Panc1 (cell line): ENCODE measurements at regions of chr10 and their contacts with region 1.

Region 1: DNA sequence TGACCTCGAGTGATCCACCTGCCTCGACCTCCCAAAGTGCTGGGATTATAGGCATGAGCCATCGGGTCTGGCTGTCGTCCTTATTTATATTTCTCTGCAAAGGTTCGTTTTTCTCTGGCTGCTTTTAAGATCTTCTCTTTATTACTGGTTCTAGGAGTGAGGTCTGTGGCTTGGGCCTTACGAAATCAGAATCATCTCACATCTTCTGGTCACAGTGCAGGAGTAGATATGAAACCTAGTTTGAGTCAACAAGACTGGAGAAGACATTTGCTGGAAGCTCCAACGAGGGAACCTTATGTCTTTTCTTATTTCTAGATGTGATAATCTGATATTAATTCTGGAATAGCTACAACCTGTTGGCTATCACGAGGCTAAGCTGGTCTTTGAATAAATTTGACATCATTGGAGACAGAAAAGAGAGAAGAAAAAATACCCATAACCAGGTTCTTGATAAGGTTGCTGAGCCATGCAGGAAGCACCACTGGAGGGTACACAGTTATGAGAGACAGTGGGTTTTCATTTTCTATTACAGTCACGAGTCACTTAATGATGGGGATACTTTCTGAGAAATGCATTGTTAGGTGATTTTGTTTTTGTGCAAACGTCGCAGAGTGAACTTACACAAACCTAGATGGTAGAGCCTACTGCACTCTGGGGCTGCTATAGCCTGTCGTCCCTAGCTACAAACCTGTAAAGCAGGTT is 25.6 kb upstream of the IL15RA start:
- DNase-seq: no peak
- ATAC-seq: no peak
- H3K4me3 ChIP-seq: no peak overlapping the region
- H3K27ac ChIP-seq: no peak overlapping the region
- H3K4me1 ChIP-seq: no peaks in the 10 kb centered on the region
- H3K27me3 ChIP-seq: no peaks in the 10 kb centered on the region
- CTCF ChIP-seq: no peak

Region 2: DNA sequence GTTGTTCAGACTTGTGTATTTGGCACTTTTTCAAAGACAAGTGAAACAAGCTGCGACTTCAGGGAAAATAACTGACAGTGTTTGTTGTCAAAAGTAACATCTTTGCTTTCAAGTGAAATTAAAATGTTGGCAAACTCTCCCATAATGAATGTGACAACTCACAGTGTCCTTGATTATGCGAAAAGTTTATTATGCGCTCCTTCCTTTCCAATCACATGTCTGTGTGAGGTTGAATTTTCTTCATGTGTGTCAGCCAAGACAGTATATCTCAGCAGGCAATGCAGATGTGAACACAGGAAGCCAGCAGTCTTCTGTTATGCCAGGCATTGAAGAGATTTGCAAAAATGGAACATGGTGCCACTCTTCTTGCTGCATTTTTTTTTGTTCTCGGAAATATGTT is 84.2 kb before region 1 on chr10:
- CTCF ChIA-PET with region 1: interaction called, 14 read pairs
- POLR2A ChIA-PET with region 1: no interaction called
- in situ Hi-C with region 1: no loop called
- intact Hi-C with region 1: no loop called
- DNase-seq: no peak
- ATAC-seq: no peak
- H3K4me3 ChIP-seq: no peak overlapping the region
- H3K27ac ChIP-seq: no peak overlapping the region
- H3K4me1 ChIP-seq: no peaks in the 10 kb centered on the region
- H3K27me3 ChIP-seq: no peaks in the 10 kb centered on the region
- CTCF ChIP-seq: no peak